ENCODE measurements at regions of chr12 and their contacts with region 1.

Region 1: DNA sequence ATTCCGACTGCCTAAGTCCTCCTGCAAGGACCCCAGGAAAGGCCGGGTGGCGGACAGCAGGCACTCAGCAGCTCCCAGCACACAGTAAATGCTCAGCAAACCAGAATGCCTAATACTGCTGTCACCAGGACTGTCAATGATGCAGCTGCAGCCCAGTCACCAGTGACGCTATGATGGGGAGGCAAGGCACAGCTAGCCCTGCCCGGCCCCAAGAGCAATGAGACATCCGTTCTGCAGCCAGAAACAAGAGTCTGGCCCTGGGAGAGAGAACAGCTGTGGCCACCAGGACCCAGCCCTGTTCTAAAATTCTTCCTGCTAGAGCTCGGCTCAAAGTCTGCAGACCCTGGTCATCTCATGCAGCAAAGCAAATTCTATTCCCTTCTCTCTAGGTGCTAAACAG is 69.8 kb downstream of the NCOR2 start:
- DNase-seq: no peak
- H3K4me3 ChIP-seq: no peak overlapping the region
- H3K27ac ChIP-seq: peak overlapping the region in 1 of 2 donors; percentile 17
- H3K4me1 ChIP-seq: peaks cover 40% of the 10 kb centered on the region
- H3K27me3 ChIP-seq: no peaks in the 10 kb centered on the region
- CTCF ChIP-seq: no peak
- EP300 ChIP-seq: no peak
- POLR2A ChIP-seq: no peak

Region 2: GRCh38 chr12:124441443-124442194 is 56.0 kb before region 1 on chr12:
- intact Hi-C with region 1: loop called in 1 of 4 experiments (anchors 5 kb)
- DNase-seq: no peak
- H3K4me3 ChIP-seq: no peak overlapping the region
- H3K27ac ChIP-seq: no peak overlapping the region
- H3K4me1 ChIP-seq: peaks cover 5% of the 10 kb centered on the region
- H3K27me3 ChIP-seq: no peaks in the 10 kb centered on the region
- CTCF ChIP-seq: no peak
- EP300 ChIP-seq: no peak
- POLR2A ChIP-seq: no peak

Measured in ovary (tissue), 10 donors.